ENCODE measurements at regions of chr14 and their contacts with region 1.

Region 1: DNA sequence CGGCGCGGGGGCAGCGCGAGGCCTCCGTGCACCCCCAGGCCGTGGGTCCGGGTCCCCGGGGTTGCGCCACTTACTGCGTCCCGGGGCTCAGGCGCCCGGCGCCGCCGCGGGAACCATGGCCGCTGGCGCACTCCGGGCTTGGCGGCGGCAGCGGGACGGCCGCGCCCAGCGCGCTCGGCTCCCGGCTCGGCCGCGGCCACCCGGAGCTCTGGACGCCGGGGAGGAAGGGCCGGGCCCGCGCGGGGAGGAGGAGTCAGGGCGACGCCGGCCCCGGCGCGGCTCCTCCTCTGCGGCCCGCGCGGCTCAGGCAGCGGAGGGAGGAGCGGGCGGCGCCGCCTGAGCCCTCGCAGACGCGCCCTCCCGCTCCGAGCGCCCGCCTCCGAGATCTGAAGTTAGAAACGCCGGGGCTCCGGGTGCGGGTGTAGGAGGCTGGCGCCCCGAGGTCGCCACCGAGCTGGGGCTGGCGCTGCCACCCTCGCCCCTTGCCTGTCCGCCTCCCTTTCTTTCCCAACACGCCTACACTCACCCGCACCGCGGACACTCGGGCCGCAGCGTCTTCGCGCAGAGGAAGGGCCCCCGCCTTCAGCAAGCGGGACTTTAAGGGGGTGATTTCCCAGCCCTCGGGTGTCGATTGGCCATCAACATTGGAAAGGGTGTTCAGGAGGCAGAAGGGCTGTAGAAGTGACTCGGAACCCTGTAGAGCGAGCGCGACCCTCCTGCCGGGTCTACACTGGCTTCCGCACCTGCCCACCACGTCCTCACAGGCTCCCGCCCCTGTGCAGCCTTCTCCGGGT is at the start of gene NIN:
- DNase-seq: peak; percentile 75
- H3K4me3 Mint-ChIP-seq: peak within 1 kb of the TSS; percentile 90
- H3K27ac Mint-ChIP-seq: peak within 1 kb of the TSS; percentile 79
- H3K4me1 Mint-ChIP-seq: peaks cover 34% of the 10 kb centered on the region
- H3K27me3 Mint-ChIP-seq: peaks cover 13% of the 10 kb centered on the region
- total RNA-seq, gene NIN: 50.3 to 56.5 TPM

Region 2: DNA sequence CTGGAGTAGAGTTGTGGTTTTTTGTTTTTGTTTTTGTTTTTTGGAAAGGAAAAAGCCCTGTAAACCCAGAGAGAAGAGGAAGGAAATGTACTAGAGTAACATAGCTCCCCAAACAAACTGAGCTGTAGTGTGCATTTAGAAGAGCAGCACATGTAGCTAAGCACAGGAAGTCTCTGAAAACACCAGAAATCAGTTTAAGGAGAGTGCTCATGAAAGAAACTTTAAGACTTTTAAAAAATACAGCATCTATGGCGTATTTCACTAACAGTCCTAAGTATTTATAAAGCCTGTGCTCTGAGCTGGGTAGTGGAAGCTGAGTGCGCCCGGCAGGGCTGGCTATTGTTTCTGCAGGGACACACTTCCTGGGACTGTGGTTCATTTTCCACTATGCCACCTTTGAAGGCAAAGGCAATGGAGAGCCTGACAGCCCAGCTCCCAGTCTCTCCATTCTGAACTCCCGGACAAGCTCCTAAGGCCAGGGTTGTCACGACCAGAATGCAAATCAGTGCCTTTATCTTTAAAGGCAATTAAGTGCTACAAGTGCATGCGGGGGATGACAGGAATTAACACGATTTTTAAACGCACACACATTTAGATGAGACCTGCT is 45.6 kb before region 1 on chr14:
- CTCF ChIA-PET with region 1: no interaction called
- POLR2A ChIA-PET with region 1: interaction called, 13 read pairs
- DNase-seq: no peak
- H3K4me3 Mint-ChIP-seq: no peak overlapping the region
- H3K27ac Mint-ChIP-seq: peak overlapping the region; percentile 76
- H3K4me1 Mint-ChIP-seq: peaks cover 51% of the 10 kb centered on the region
- H3K27me3 Mint-ChIP-seq: no peaks in the 10 kb centered on the region